ENCODE measurements at regions of chr22 and their contacts with region 1.

Region 1: GRCh38 chr22:37817705-37818408 is 5.3 kb upstream of the GALR3 start:
- DNase-seq: peak; percentile 90

Region 2: DNA sequence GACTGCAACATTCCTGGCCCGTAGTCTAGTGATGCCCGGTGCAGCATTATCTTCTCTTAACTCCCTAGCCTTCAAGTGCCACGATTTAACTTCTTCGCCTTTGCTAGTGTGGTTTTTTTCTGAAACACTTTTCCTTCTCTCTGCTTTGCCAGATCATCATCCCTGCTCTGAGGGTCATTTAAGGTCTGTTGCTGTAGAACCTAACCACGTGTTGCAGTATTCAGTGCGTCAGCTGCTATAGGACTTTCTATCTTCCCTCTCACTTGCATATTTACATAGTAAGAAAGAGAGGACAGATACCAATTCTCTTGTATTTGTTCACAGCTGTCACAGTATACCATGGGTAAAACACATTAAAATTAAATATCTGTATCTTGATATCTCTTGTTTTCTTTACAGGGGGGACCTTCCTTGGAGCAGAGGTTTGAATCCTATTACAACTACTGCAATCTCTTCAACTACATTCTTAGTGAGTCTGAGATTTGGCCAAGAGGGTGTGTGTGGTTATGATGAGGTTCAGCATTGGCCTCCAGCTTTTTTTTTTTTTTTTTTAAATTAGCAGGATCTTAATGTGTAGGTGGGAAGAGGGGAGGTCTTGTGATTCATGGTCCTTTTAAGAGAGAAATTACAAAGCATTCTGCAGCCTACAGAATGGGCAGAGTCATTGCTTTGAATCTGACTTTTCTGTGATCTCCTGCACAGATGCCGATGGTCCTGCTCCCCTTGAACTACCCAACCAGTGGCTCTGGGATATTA is 44.9 kb after region 1 on chr22:
- intact Hi-C with region 1: loop called (anchors 1 kb)
- DNase-seq: no peak

Region 3: GRCh38 chr22:37933711-37934376 is 116.0 kb after region 1 on chr22:
- intact Hi-C with region 1: loop called (anchors 10 kb)
- DNase-seq: peak; percentile 95

Region 4: DNA sequence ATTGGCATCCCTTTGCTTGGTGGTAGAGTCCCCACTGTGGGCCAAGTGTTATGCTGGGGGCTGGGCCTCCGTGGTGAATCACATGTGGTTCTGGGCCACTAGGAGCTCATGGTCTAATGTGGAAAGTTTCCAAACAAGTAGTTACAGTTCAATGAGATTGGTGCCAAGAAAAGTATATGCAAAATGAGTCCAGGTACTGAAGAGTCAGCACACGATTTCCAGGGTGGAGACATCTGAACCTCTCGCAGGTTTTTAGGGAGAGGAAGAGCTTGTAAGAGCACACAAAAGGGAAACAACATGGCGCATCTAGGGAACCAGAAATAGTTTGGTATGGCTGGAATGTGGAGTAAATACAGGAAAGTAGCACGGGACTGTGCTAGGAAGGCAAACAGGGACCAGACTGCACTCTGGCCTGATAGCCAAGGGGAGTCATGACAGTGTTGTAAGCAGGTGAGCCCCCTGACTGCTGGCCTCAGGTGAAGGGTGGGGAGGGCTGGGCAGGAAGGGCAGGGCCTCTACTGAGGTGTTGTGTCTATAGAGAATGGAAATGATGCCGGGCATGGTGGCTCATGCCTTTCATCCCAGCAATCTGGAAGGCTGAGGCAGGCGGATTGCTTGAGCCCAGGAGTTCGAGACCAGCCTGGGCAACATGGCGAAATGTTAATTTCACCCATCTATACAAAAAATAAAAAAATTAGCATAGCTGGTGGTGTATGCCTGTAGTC is 148.2 kb after region 1 on chr22:
- intact Hi-C with region 1: loop called (anchors 5 kb)
- DNase-seq: no peak

Measured in cardiac septum (tissue), 1 donor.